Ovary (tissue), 10 donors: ENCODE measurements at regions of chr9 and their contacts with region 1.

Region 1: DNA sequence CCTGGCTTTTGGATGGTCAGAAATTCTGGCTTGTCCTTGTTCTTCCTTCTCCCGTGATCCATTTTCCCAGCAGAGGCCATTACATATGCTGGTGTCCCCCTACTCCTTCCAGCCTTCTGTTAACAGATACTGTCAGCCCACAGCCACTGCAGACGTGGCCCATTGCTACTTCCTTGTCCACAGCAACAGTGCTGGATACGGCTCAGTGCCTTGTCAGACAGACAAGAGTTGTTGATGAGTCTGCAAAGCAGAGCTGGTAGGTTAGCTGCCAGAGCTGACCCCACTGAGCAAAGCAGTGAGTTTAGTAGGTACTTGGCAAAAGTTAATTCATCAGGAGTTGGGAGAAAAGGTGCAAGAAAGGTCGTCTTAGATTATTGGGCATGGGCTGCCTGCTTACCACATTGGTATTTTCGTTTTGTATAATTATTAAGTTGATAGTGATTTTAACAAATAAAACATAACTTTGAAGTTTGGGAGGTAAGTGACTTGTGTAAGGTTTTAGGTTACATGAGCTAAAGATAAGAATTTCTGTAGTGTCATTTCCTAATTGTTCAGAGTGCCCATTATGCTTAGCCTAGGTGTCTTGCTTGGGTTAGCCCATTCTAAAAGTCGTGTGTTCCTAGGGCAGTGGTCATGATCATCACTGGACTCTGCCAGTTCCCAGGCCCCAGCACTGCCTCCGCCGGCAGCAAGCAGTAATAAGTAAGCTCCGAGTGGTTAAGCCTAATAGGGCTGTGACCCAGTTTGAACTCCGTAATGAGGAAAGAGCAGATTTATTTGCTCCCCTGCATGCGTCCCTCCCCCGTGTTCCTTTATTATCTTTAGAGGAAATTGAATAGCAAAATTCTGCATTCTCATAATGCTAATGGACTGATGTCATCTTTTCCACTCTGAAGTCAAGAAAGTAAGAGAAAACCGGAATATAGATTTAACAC is 292.0 kb downstream of the FANCC start:
- DNase-seq: peak in 4 of 5 donors; percentile 54 to 75 (median 65)
- H3K4me3 ChIP-seq: no peak overlapping the region
- H3K27ac ChIP-seq: peak overlapping the region; percentile 20 to 41
- H3K4me1 ChIP-seq: peaks cover 40% of the 10 kb centered on the region
- H3K27me3 ChIP-seq: no peaks in the 10 kb centered on the region
- CTCF ChIP-seq: no peak
- EP300 ChIP-seq: no peak
- POLR2A ChIP-seq: no peak

Region 2: DNA sequence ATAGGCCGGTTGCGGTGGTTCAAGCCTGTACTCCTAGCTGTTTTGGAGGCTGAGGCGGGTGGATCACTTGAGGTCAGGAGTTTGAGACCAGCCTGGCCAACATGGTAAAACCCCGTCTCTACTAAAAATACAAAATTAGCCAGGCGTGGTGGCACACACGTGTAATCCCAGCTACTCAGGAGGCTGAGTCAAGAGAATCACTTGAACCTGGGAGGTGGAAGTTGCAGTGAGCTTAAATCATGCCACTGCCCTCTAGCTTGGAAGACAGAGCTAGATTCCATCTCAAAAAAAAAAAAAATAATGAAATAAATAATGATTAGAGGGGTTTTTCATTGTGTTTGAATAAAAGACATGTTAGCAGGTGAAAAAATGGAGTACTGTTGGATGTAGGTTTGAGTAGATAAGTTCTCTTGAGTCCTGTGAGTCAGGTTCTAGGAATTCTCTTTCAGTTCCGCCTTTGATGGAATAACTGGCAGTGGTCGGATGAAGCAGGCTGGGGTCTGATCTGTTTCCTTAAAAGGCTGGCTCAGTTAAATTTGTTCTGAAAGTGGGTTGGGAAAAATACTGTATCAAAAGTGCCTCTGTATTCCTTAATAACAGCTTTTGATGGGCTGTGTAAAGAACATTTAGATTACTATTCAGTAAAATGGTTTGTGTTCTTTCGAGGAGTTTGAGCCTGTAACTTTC is 225.8 kb before region 1 on chr9:
- intact Hi-C with region 1: loop called in 1 of 4 experiments (anchors 10 kb)
- DNase-seq: no peak
- H3K4me3 ChIP-seq: no peak overlapping the region
- H3K27ac ChIP-seq: no peak overlapping the region
- H3K4me1 ChIP-seq: peaks cover 8% of the 10 kb centered on the region
- H3K27me3 ChIP-seq: no peaks in the 10 kb centered on the region
- CTCF ChIP-seq: no peak
- EP300 ChIP-seq: no peak
- POLR2A ChIP-seq: no peak

Region 3: GRCh38 chr9:94980947-94981722 is 44.3 kb before region 1 on chr9:
- intact Hi-C with region 1: no loop called
- DNase-seq: no peak
- H3K4me3 ChIP-seq: no peak overlapping the region
- H3K27ac ChIP-seq: no peak overlapping the region
- H3K4me1 ChIP-seq: no peaks in the 10 kb centered on the region
- H3K27me3 ChIP-seq: no peaks in the 10 kb centered on the region
- CTCF ChIP-seq: no peak
- EP300 ChIP-seq: no peak
- POLR2A ChIP-seq: no peak